Activated T-helper 2 cell treated with anti-CD3 and anti-CD28 coated beads, Interferon-gamma antibody, Interleukin-2, Interleukin-4, amounts not matched to agents 10 μg/mL and 5 μg/mL and 100 μg/mL, durations not matched to agents 14 hours and 24 hours and 36 hours (primary cell): ENCODE measurements at regions of chr1 and their contacts with region 1.

Region 1: DNA sequence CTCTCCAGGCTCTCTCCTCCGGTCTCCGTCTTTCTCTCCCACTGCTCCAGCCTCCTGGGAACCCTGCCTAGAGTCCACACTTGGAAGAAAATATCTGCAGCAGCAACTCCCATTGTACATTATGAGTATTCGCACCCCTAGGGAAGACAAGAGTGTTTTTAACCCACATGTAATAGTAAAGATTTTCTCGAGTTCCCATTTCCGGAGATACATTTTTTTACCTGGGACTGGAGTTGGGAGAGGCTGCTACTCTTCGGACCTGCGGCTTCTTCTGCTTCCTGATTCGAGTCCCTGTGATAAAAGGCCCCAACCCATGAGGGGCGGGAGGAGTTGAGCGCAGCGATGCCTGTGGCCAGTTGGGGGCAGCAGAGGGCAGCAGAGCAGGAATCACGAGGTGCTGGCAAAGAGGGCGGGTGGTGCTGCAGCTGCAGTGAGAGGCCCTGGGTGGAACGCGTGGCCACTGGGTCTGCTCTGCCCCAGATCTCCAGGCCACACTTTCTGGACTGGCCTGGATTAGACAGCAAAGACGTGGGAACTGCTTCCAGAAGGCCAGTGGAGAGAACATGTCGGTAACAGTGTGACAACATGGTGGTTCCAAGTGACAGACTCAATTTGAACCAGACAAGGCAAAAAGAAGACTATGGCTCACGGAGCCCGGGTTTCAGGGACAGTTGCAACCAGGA is 221.0 kb upstream of the CSF3R start:
- DNase-seq: peak; percentile 60
- H3K4me3 Mint-ChIP-seq: no peak overlapping the region
- H3K27ac Mint-ChIP-seq: no peak overlapping the region
- H3K4me1 Mint-ChIP-seq: peaks cover 4% of the 10 kb centered on the region
- H3K27me3 Mint-ChIP-seq: peaks cover 8% of the 10 kb centered on the region

Region 2: DNA sequence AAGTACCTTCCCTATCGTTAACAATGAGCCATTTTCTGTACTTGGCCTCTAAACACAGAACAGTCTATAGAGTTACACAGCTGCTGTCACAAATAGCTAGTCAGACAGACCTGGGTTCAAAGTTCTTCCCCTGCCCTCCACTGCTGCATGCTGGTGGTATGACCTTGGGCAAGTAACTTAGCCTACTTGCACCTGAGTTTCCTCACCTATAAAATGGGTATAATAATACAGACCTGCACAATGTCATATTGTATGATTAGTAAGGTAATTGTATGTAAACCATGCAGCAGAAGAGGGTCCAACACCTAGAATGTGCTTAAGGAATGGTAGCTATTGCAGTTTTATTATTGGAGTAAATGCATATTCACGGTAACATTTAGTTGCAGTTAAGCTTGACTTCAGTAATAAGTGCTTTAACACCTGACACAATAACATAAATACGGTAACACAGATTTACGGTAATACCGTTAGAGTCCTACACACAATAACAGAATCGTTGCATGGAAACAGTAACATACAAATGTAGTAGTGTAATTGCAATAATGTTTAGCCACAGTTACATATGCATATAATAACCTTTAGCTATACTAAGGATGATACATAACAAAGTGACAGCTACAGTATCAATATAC is 27.6 kb before region 1 on chr1:
- intact Hi-C with region 1: no loop called
- DNase-seq: no peak
- H3K4me3 Mint-ChIP-seq: no peak overlapping the region
- H3K27ac Mint-ChIP-seq: no peak overlapping the region
- H3K4me1 Mint-ChIP-seq: no peaks in the 10 kb centered on the region
- H3K27me3 Mint-ChIP-seq: peaks cover 16% of the 10 kb centered on the region

Region 3: GRCh38 chr1:37323486-37324377 is 620.1 kb after region 1 on chr1:
- intact Hi-C with region 1: loop called (anchors 5 kb)
- DNase-seq: no peak
- H3K4me3 Mint-ChIP-seq: no peak overlapping the region
- H3K27ac Mint-ChIP-seq: no peak overlapping the region
- H3K4me1 Mint-ChIP-seq: no peaks in the 10 kb centered on the region
- H3K27me3 Mint-ChIP-seq: peaks cover 9% of the 10 kb centered on the region